Activated CD4-positive, alpha-beta T cell treated with anti-CD3 and anti-CD28 coated beads for 36 hours (primary cell): ENCODE measurements at regions of chr7 and their contacts with region 1.

Region 1: GRCh38 chr7:123682690-123683089 is 27.0 kb downstream of the LMOD2 start:
- DNase-seq: peak; percentile 11
- ATAC-seq: no peak
- H3K4me3 Mint-ChIP-seq: no peak overlapping the region
- H3K27ac Mint-ChIP-seq: no peak overlapping the region
- H3K4me1 Mint-ChIP-seq: no peaks in the 10 kb centered on the region
- H3K27me3 Mint-ChIP-seq: no peaks in the 10 kb centered on the region

Region 2: DNA sequence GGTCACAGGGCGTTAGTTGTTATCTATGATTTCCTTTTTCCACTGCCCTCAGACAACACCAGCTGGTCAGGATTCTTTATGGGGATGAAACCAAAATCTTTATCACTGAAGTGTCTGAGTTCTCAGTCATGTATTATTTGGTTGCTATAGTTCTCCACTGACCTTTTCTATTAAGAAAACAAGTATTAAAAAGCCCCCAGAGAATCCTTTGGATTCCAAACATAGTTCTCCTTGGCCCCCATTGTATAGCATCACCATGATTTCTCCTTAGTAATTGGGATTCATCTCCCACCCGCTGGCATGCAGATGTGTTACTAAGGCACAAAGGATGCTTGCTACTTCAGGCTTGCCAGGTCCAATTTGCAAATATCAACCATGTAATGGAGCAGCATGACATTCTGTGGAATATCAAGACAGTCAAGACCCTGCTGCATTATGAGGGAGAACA is 242.6 kb before region 1 on chr7:
- CTCF ChIA-PET with region 1: no interaction called
- POLR2A ChIA-PET with region 1: no interaction called
- intact Hi-C with region 1: no loop called
- DNase-seq: no peak
- ATAC-seq: no peak
- H3K4me3 Mint-ChIP-seq: no peak overlapping the region
- H3K27ac Mint-ChIP-seq: no peak overlapping the region
- H3K4me1 Mint-ChIP-seq: no peaks in the 10 kb centered on the region
- H3K27me3 Mint-ChIP-seq: no peaks in the 10 kb centered on the region

Region 3: DNA sequence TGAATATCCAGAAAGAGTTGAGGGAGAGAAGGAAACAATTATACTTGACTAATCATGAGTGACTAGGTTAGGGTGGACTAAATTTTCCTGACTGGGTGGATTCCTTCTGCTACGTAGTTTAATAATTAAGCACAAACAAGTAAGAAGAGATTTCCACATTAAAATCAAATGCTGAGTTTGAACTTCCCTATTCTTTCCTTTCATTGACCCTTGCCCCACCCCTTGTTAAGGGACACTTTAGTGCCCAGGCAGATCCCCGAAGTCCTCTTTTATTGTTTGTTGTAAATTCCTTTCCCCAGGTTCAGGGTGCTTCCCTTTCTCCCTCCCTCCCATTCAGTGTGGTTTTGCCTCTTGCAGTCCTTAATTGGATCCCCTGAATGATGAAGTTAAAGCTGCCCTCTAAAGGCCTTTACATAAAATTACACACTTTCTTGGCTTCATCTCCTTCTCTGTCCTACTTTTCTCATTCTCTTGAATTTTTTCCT is 233.6 kb after region 1 on chr7:
- CTCF ChIA-PET with region 1: no interaction called
- POLR2A ChIA-PET with region 1: no interaction called
- intact Hi-C with region 1: loop called in 1 of 2 experiments (anchors 5 kb)
- DNase-seq: no peak
- ATAC-seq: no peak
- H3K4me3 Mint-ChIP-seq: no peak overlapping the region
- H3K27ac Mint-ChIP-seq: no peak overlapping the region
- H3K4me1 Mint-ChIP-seq: no peaks in the 10 kb centered on the region
- H3K27me3 Mint-ChIP-seq: peaks cover 5% of the 10 kb centered on the region